Breast epithelium (tissue), 4 donors: ENCODE measurements at regions of chr1 and their contacts with region 1.

Region 1: DNA sequence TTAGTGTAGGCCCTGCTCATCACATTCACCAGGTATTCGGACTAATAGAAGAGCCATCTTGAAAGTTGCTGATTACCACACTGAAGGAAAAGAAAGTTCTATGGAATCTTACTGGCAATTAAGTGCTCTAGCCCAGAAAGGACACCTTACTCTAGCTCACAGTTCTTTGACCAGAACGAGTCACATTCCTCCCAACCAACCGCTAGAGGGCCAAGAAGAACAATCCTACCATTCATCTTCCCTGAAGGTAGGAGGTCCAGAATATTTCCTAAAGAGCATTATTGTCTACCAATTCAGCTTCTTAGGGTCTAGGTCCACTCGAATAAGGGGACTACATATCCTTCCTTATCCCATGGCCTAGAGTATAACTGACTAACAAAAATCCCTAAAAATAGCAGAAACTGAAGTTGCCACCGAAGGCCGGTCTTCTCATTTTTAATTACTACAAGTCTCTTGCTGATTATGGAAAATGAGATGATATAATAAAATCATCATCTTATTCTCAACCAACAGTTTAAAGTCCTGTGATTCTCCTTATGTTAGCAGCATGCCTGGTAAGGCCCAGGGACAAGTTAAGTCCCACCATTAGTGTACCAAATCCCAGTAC is 2.7 kb upstream of the FMO1 start:
- DNase-seq: no peak
- H3K4me3 ChIP-seq: no peak overlapping the region
- H3K27ac ChIP-seq: no peak overlapping the region
- H3K4me1 ChIP-seq: no peaks in the 10 kb centered on the region
- H3K27me3 ChIP-seq: no peaks in the 10 kb centered on the region
- CTCF ChIP-seq: peak; percentile 69 to 76 (median 72)
- POLR2A ChIP-seq: no peak

Region 2: DNA sequence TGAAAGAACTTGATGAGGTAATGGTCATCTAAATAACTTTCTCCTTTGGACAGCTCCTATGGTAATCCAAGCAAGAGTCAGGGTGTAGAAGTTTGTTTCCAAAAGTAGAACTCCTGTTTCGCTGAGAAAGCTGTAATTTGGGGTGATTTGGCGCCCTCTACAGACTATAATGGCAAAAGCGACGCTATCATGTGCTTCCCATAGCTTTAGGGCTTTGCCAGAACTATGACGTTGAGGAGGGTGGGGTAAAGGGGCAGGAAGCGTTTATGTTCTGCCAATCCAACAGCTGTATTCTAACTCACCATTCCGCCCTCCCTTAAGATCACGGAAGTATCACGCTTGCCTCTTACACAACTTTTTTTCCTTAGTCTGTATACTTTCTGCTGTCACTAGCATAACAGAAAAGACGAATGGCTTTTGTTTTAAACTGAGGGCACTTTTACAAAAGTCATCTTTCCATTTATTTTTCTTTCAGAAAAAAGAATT is 68.3 kb after region 1 on chr1 and contains the start of gene FMO4:
- intact Hi-C with region 1: loop called (anchors 10 kb)
- DNase-seq: peak; percentile 79 to 95
- H3K4me3 ChIP-seq: peak within 1 kb of the TSS; percentile 9 to 59 (median 41)
- H3K27ac ChIP-seq: peak within 1 kb of the TSS; percentile 53 to 73
- H3K4me1 ChIP-seq: no peaks in the 10 kb centered on the region
- H3K27me3 ChIP-seq: no peaks in the 10 kb centered on the region
- CTCF ChIP-seq: peak; percentile 79 to 92 (median 88)
- POLR2A ChIP-seq: no peak
- total RNA-seq, gene FMO4: 7.7 to 27.7 (median 20.3) TPM

Region 3: DNA sequence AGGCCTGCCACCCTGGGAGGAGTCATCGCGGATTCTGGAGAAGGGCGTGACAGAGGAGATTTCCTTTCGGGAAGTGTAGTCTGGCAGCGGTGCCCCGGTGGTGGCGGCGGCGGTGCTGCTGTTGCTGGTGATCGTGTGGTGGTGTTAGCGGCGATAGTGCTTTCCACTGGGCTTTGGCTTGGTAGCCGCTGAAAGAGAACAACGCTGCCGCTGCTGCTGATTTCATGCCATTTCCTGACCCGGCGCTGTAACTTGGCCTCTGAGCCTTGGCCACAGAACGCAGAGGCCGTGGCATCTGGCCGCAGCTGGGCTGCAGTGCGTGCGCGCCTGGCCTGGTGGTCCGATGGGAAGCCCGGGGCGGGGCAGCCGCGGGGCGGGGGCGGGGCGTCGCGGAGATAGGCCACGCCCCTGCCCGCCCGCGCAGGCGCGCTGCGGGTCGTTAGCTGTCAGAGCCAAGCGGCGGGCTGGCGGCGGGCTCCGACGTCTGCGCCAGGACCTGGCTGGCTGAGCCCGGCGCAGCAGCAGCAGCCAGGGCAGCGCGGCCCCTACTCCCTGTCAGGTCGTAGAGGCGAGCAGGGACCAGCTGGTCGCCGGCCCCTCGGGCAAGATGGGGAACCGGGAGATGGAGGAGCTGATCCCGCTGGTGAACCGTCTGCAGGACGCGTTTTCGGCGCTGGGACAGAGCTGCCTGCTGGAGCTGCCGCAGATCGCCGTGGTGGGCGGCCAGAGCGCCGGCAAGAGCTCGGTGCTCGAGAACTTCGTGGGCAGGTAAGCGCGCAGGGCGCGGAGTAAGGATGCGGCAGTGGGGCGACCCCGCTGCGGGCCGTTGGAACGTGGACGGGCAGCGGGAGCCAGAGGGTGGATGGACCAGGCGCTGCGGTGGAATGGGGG is 595.7 kb after region 1 on chr1 and contains the start of gene DNM3:
- intact Hi-C with region 1: no loop called
- DNase-seq: peak; percentile 39 to 56
- H3K4me3 ChIP-seq: peak within 1 kb of the TSS; percentile 71 to 85 (median 75)
- H3K27ac ChIP-seq: peak within 1 kb of the TSS; percentile 52 to 61
- H3K4me1 ChIP-seq: no peaks in the 10 kb centered on the region
- H3K27me3 ChIP-seq: no peaks in the 10 kb centered on the region
- CTCF ChIP-seq: no peak
- POLR2A ChIP-seq: no peak
- total RNA-seq, gene DNM3: 5.1 to 7.5 (median 6.6) TPM